ENCODE measurements at regions of chr2 and their contacts with region 1.

Region 1: DNA sequence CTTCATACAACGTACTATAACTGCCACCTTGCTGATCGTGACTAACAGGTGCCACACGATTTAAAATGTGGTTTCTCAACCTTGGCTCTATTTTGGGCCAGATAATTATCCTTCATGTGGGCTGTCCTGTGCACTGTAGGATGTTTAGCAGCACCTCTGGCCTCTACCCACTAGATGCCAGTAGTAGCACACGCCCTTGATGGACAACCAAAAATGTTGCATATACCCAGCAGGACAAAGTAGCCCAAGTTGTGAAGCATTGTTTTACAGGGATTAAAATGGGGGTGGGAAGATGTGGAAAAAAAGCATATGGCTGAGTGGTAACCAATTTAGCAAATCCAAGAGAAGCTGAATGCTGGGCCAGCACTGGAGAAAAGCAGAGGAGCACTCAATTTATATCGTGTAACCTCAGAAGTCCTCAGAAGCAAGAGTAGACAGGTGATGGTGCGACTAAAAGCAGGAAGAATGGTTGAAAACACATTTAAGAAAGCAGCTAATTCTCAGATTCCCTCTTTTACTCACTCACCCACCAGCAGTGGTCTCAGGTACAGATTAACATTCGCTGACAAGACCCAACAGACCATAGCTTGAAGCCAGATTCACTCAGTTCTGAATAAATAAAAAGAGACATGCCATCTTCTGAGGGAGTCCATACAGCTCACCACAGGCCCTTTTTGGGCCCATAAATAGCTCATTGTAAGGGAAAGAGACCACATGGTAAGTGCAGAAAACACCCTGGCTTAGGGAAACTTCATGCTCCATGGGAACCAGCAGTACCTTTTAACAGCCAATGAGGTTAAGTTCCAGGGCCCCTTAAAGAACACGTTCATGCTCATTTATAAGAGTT is 50.6 kb downstream of the RAPH1 start:
- DNase-seq: peak; percentile 35
- CTCF ChIP-seq: peak; percentile 86

Region 2: GRCh38 chr2:203650860-203651613 is 166.5 kb after region 1 on chr2:
- in situ Hi-C with region 1: loop called (anchors 25 kb)
- DNase-seq: no peak
- CTCF ChIP-seq: peak; percentile 13

Region 3: GRCh38 chr2:203814661-203815540 is 330.4 kb after region 1 on chr2:
- in situ Hi-C with region 1: loop called (anchors 5 kb)
- DNase-seq: peak; percentile 69
- CTCF ChIP-seq: peak; percentile 67